PC-9 (cell line): ENCODE measurements at regions of chr14 and their contacts with region 1.

Region 1: DNA sequence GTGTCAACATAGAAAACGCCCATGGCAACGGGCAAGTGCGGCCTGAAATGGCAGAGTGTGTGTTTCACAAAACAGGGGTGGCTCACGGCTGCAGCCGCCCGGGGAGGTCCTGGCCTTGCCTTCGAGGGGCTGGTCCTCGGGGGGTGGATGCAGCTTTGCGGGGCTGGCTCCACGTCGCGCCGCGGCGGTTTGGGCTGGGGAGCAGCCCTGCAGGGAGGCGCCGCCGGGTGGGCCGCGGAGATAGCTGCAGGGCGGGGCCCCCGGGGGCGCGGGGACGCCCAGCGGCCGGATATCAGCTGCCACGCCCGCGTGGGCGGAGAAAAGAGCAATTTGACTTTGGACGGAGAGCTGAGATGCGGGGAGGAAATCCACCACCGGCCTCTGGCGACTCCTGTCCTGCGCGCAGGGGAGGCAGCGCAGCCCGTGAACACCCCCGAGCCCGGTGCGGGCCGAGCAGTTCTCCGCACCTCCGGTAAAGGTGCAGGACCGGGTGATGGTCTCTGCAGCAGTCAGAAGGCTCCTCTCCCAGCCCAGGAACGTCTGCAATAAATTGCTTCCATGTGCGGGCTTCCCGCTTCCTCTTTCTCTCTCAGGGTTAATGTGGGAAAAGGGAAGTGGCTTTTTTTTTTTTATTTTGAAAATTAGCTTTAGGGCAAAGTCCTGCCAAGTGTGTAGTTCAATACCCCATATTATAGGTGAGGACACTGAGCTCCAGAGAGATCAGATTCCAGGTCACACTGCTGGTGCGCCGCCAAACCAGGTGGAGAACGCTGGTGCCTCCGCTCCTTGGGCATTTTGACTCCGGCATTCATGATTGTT is 110.5 kb downstream of the ARF6 start:
- DNase-seq: peak; percentile 78 to 80
- H3K4me3 ChIP-seq: peak overlapping the region; percentile 63
- H3K27ac ChIP-seq: peak overlapping the region; percentile 95
- H3K4me1 ChIP-seq: peaks cover 88% of the 10 kb centered on the region
- H3K27me3 ChIP-seq: no peaks in the 10 kb centered on the region
- CTCF ChIP-seq: no peak

Region 2: DNA sequence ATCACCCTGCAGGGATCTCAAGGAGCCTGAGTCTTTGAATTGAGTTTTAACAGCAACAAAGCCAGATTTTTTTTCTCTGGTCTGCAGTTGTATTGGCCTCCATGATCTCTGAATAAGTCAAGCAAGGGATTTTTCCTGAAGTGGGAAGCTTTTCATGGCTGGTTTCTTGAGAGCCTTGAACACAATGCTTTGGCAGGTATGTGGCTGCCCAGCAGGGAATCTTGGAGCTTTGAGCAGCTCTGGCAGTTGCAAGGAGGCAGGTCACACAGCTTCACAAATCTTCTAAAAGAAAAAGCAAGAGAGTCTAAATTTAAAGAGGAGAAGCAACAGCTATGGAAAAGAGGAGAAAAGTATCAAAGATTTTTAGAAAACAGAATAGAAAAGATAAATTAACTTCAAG is 477.3 kb before region 1 on chr14:
- CTCF ChIA-PET with region 1: no interaction called
- POLR2A ChIA-PET with region 1: no interaction called
- intact Hi-C with region 1: no loop called
- DNase-seq: no peak
- H3K4me3 ChIP-seq: no peak overlapping the region
- H3K27ac ChIP-seq: no peak overlapping the region
- H3K4me1 ChIP-seq: 0 out of 2 replicates have a peak, but pooled peaks cover 8% of the 10 kb centered on the region
- H3K27me3 ChIP-seq: no peaks in the 10 kb centered on the region
- CTCF ChIP-seq: no peak

Region 3: GRCh38 chr14:49598485-49599300 is 404.7 kb before region 1 on chr14 and contains the start of gene LRR1:
- CTCF ChIA-PET with region 1: no interaction called
- POLR2A ChIA-PET with region 1: no interaction called
- intact Hi-C with region 1: no loop called
- DNase-seq: peak; percentile 72 to 88
- H3K4me3 ChIP-seq: peak within 1 kb of the TSS; percentile 100
- H3K27ac ChIP-seq: peak within 1 kb of the TSS; percentile 83
- H3K4me1 ChIP-seq: peaks cover 29% of the 10 kb centered on the region
- H3K27me3 ChIP-seq: no peaks in the 10 kb centered on the region
- CTCF ChIP-seq: no peak
- total RNA-seq, gene LRR1: 16.1 and 19.0 TPM in 2 replicates

Region 4: DNA sequence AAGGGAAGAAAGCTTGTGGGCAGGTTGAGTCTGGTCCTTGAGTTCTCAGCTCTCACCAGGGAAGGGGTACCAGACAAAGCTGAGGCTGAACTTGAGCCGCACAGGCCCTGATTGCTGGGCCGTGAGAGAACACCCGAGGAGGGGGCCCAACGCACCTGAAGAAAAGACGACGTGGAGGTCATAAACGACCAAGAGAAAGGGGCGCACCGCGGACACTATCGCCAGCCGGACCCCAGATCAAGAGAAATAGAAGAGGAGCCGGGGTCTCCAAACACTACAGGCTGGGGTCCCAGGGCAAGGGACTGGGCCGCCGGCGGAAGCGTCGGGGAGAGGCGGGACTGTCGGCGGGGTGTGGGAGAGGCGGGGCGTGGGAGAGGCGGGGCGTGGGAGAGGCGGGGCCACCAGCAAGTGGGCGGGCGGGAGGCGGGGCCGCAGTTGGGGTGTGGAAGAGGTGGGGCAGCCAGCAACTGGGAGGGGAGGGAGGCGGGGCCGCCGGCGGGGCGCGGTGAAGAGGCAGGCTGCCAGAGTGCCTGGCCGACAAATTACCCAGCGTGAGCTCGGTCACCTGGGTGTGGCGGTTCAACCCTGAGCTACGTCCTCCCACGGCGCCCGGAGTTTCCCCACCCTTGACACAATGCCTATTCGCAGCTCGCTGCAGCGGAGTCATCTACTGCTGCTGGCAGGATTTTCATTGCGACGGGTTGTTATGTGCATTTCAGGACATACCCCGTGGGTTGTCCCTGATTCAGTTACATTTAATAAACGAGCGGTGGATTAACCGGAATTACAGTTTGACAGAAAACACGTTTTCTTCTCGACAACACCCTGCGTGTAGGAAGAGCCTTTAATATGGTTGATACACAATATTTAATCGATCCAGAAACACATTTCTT is 135.3 kb before region 1 on chr14:
- CTCF ChIA-PET with region 1: interaction called, 9 read pairs
- POLR2A ChIA-PET with region 1: interaction called, 9 read pairs
- intact Hi-C with region 1: loop called (anchors 1 kb)
- DNase-seq: peak; percentile 88 to 94
- H3K4me3 ChIP-seq: peak overlapping the region; percentile 85
- H3K27ac ChIP-seq: peak overlapping the region; percentile 78
- H3K4me1 ChIP-seq: peaks cover 32% of the 10 kb centered on the region
- H3K27me3 ChIP-seq: no peaks in the 10 kb centered on the region
- CTCF ChIP-seq: no peak

Region 5: GRCh38 chr14:49908432-49908781 is 95.0 kb before region 1 on chr14:
- CTCF ChIA-PET with region 1: interaction called, 4 read pairs
- POLR2A ChIA-PET with region 1: interaction called, 11 read pairs
- intact Hi-C with region 1: no loop called
- DNase-seq: peak in 1 of 2 experiments; percentile 85
- H3K4me3 ChIP-seq: no peak overlapping the region
- H3K27ac ChIP-seq: peak overlapping the region; percentile 86
- H3K4me1 ChIP-seq: peaks cover 50% of the 10 kb centered on the region
- H3K27me3 ChIP-seq: no peaks in the 10 kb centered on the region
- CTCF ChIP-seq: no peak

Region 6: DNA sequence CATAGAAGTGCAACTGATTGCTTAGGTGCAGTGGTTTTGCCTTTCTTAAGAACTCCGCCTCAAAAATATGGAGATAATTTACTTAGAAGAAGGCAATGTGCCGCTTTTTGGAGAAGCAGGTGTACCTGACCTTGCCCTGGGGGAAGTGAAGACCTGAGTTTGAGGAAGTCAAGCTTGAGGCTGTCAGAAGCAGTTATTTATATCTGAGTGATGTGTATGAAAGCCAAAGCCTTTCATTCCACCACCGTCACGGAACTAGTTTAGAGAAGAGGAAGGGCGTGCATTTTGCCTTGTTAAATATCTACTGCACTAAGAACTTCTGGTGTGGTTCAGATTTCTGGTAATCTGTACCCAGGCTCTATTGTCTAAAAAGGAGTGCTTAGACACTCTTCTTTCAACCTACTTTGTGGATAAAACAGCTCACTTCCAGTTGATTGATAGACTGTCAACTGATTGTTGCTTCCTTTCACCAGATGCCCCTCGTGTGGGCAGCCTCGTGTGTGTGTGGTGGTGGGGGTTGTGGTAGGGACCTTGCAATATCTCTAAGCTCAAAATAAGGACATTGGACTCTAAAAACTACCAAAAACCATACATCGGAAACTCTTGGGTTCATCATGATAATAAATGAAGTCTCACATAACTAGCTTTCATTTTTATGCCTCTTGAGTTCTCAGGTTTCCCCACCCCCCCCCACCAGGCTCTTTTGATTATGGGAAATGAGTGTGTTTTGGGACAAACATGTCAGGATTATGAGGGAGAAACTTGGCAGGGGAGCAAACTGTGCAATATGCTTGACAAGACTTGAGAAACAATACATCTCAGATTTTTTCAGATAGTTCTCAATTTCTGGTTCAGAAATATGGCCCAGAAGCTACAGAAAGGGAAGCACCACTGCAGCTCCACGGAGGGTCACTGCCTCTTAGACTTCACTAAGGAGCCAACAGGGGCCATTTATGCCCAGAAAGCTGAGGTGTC is 32.0 kb before region 1 on chr14:
- CTCF ChIA-PET with region 1: interaction called, 8 read pairs
- POLR2A ChIA-PET with region 1: interaction called, 10 read pairs
- intact Hi-C with region 1: loop called (anchors 1 kb)
- DNase-seq: no peak
- H3K4me3 ChIP-seq: peak overlapping the region; percentile 40; the same call in 1 of the 2 replicates
- H3K27ac ChIP-seq: peak overlapping the region; percentile 97
- H3K4me1 ChIP-seq: peaks cover 81% of the 10 kb centered on the region
- H3K27me3 ChIP-seq: no peaks in the 10 kb centered on the region
- CTCF ChIP-seq: no peak

Region 7: GRCh38 chr14:50109342-50109741 is 105.9 kb after region 1 on chr14:
- CTCF ChIA-PET with region 1: interaction called, 7 read pairs
- POLR2A ChIA-PET with region 1: no interaction called
- intact Hi-C with region 1: loop called (anchors 1 kb)
- DNase-seq: no peak
- H3K4me3 ChIP-seq: no peak overlapping the region
- H3K27ac ChIP-seq: no peak overlapping the region
- H3K4me1 ChIP-seq: peaks cover 7% of the 10 kb centered on the region; the same call in 1 of the 2 replicates
- H3K27me3 ChIP-seq: no peaks in the 10 kb centered on the region
- CTCF ChIP-seq: peak; percentile 34

Region 8: DNA sequence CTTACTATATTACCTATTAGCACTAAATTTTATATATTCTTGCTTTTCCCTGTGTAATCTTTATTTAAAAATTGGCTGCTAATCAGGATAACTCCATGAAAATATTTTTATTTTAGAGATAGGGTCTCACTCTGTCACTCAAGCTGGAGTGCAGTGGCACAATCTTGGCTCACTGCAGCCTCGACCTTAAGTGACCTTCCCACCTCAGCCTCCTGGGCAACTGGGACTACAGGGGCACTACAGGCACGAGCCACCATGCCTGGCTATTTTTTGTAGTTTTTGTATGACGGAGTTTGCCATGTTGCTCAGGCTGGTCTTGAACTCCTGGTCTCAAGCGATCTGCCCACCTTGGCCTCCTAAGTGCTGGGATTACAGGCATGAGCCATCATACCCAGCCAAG is 145.4 kb after region 1 on chr14:
- CTCF ChIA-PET with region 1: no interaction called
- POLR2A ChIA-PET with region 1: no interaction called
- intact Hi-C with region 1: no loop called
- DNase-seq: no peak
- H3K4me3 ChIP-seq: no peak overlapping the region
- H3K27ac ChIP-seq: no peak overlapping the region
- H3K4me1 ChIP-seq: peaks cover 8% of the 10 kb centered on the region
- H3K27me3 ChIP-seq: no peaks in the 10 kb centered on the region
- CTCF ChIP-seq: no peak

Region 9: GRCh38 chr14:50688875-50689274 is 685.5 kb after region 1 on chr14:
- CTCF ChIA-PET with region 1: no interaction called
- POLR2A ChIA-PET with region 1: no interaction called
- intact Hi-C with region 1: no loop called
- DNase-seq: no peak
- H3K4me3 ChIP-seq: no peak overlapping the region
- H3K27ac ChIP-seq: no peak overlapping the region
- H3K4me1 ChIP-seq: no peaks in the 10 kb centered on the region
- H3K27me3 ChIP-seq: no peaks in the 10 kb centered on the region
- CTCF ChIP-seq: no peak